ENCODE measurements at regions of chr9 and their contacts with region 1.

Region 1: DNA sequence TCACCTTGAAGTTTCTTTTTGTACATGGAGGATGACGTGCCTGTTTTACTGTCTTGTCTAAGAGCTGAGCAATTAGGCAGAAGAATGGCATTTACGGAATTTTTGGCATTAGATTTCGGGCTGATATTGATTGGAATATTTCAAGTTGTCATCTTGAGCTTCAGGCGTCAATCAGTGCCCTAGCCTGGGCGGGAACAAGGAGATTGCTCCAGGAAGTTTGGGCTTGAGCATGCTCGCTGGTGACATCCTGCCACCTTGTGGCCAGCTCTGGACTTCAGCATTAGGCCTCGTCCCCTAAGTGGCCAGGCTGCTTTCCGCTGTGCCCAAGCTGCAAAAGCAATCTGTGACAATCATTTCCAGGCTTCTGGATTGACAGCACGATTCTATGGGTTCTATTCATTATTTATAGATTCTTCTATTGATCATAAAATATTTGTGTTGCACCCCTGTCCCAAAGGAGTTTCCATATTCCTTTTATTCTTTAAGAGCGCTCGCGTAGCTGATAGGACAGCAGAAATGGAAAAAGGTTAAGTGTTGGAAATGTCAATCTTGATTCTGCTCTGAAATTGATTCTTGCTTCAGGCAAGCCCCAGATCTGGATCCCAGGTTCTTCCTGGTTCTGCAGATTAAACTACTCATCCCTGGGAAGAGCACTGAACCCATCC is 79.3 kb downstream of the SLC28A3 start:
- DNase-seq: peak; percentile 76
- H3K4me3 Mint-ChIP-seq: peak overlapping the region; percentile 7
- H3K27ac Mint-ChIP-seq: no peak overlapping the region
- H3K4me1 Mint-ChIP-seq: peaks cover 7% of the 10 kb centered on the region
- H3K27me3 Mint-ChIP-seq: no peaks in the 10 kb centered on the region

Region 2: DNA sequence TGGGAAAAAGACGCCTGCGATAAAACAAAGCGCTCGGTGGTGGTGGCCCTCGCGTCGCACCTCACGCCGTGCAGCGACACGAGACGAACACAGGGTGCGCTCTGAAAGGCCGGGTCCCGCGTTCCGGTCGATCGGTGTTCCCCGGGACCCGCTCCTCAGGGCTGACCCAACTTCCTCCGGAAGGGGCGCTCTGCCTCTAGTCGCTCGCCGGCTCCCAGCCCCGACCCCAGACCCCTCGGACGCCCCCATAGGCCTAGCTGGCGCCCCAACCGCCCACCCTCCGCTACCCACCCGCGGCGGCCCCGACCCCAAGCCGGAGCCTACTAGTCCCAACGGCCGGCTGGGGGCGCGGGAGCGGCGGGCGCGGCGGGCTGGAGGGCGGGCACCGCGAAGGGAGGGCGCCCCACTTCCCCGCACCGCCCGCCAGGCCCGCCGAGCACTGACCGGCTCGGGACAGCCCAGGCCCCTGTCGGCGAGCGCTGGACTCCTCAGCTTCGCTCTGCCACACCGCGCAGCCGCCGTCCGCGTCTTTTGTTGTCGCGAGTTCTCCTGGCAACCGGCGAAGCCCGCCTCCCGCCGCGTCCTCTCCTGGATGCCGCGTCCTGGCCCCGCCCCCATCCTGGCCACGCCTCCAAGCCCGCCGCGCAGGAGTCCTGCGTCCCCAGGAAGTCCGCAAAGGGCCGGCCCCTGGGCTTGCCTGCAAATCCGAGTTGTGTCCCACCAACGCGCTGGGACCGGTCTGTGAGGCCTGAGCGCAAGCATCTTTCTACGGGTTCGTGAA is 340.1 kb before region 1 on chr9 and contains the start of gene KIF27:
- CTCF ChIA-PET with region 1: interaction called, 4 read pairs
- intact Hi-C with region 1: loop called (anchors 1 kb)
- DNase-seq: peak; percentile 98
- H3K4me3 Mint-ChIP-seq: peak within 1 kb of the TSS; percentile 82
- H3K27ac Mint-ChIP-seq: peak within 1 kb of the TSS; percentile 90
- H3K4me1 Mint-ChIP-seq: peaks cover 10% of the 10 kb centered on the region
- H3K27me3 Mint-ChIP-seq: no peaks in the 10 kb centered on the region
- total RNA-seq, gene KIF27: 2.7 to 3.8 TPM

Region 3: GRCh38 chr9:83937911-83938323 is 323.3 kb before region 1 on chr9:
- CTCF ChIA-PET with region 1: interaction called, 12 read pairs
- intact Hi-C with region 1: loop called (anchors 1 kb)
- DNase-seq: peak; percentile 35
- H3K4me3 Mint-ChIP-seq: no peak overlapping the region
- H3K27ac Mint-ChIP-seq: no peak overlapping the region
- H3K4me1 Mint-ChIP-seq: no peaks in the 10 kb centered on the region
- H3K27me3 Mint-ChIP-seq: no peaks in the 10 kb centered on the region

Region 4: GRCh38 chr9:84002344-84002743 is 258.9 kb before region 1 on chr9:
- CTCF ChIA-PET with region 1: no interaction called
- intact Hi-C with region 1: no loop called
- DNase-seq: no peak
- H3K4me3 Mint-ChIP-seq: no peak overlapping the region
- H3K27ac Mint-ChIP-seq: no peak overlapping the region
- H3K4me1 Mint-ChIP-seq: peaks cover 12% of the 10 kb centered on the region
- H3K27me3 Mint-ChIP-seq: no peaks in the 10 kb centered on the region

Region 5: DNA sequence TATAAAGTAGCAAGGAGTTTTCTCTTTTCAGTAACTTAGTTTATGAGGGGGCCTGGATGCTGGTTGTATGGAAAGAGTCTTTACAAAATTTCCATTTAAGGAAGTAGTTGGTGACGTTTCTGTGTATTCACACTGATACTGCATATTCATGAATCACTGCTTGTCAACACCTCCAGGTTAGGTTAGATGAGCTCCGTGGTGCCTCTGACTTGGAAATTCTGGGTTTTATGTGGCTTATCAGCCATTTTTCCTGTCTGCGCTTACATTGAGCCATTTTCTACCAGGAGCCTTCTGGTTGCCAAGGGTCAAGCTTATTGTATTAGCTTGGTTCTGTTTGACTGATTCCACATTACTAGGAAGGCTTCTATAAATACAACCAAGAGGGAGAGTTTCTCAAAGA is 49.0 kb before region 1 on chr9:
- CTCF ChIA-PET with region 1: interaction called, 10 read pairs
- intact Hi-C with region 1: no loop called
- DNase-seq: no peak
- H3K4me3 Mint-ChIP-seq: no peak overlapping the region
- H3K27ac Mint-ChIP-seq: no peak overlapping the region
- H3K4me1 Mint-ChIP-seq: no peaks in the 10 kb centered on the region
- H3K27me3 Mint-ChIP-seq: no peaks in the 10 kb centered on the region

Region 6: GRCh38 chr9:84244850-84245249 is 16.4 kb before region 1 on chr9:
- CTCF ChIA-PET with region 1: interaction called, 11 read pairs
- intact Hi-C with region 1: no loop called
- DNase-seq: no peak
- H3K4me3 Mint-ChIP-seq: no peak overlapping the region
- H3K27ac Mint-ChIP-seq: no peak overlapping the region
- H3K4me1 Mint-ChIP-seq: no peaks in the 10 kb centered on the region
- H3K27me3 Mint-ChIP-seq: peaks cover 7% of the 10 kb centered on the region

Region 7: GRCh38 chr9:84285381-84285780 is 24.2 kb after region 1 on chr9:
- CTCF ChIA-PET with region 1: interaction called, 13 read pairs
- intact Hi-C with region 1: no loop called
- DNase-seq: no peak
- H3K4me3 Mint-ChIP-seq: no peak overlapping the region
- H3K27ac Mint-ChIP-seq: peak overlapping the region; percentile 19
- H3K4me1 Mint-ChIP-seq: peaks cover 11% of the 10 kb centered on the region
- H3K27me3 Mint-ChIP-seq: no peaks in the 10 kb centered on the region

Region 8: DNA sequence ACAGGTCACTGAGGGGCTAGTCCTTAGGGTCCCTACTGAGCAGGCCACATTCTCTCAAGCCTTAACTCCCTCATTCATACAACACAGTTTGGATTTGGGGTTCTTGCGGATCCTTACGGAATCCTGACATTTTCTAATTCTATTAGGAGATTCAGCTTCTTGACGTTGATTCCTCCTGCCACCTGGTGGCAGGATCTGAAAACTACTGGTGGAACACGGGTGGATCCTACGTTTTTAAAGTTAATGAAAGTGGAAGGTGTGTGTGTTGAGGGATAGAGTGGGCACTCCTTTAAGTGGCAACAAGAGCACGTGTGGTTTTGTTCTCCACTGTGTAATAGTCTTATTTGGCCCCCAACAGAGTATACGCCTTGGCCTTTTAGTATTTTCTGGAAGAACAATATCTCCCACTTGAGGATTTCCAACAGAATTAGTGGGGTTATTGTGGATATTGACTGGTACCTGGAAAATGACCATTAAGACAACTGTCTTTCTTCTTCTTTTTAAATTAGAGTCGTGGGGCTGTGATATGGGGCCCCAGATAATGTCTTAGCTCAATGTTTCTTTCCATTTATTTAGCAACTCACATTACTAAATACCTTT is 54.2 kb after region 1 on chr9:
- CTCF ChIA-PET with region 1: interaction called, 27 read pairs
- intact Hi-C with region 1: loop called (anchors 1 kb)
- DNase-seq: peak; percentile 79
- H3K4me3 Mint-ChIP-seq: no peak overlapping the region
- H3K27ac Mint-ChIP-seq: no peak overlapping the region
- H3K4me1 Mint-ChIP-seq: peaks cover 14% of the 10 kb centered on the region
- H3K27me3 Mint-ChIP-seq: no peaks in the 10 kb centered on the region

Measured in activated naive CD4-positive, alpha-beta T cell treated with anti-CD3 and anti-CD28 coated beads for 36 hours (primary cell).